ENCODE measurements at regions of chr14 and their contacts with region 1.

Region 1: GRCh38 chr14:67285876-67286452 is 44.7 kb downstream of the PALS1 start:
- DNase-seq: no peak
- ATAC-seq: no peak
- H3K4me3 ChIP-seq: no peak overlapping the region
- H3K27ac ChIP-seq: no peak overlapping the region
- H3K4me1 ChIP-seq: no peaks in the 10 kb centered on the region
- H3K27me3 ChIP-seq: no peaks in the 10 kb centered on the region
- CTCF ChIP-seq: peak; percentile 43 to 78 (median 62)

Region 2: GRCh38 chr14:67166450-67166853 is 119.5 kb before region 1 on chr14:
- intact Hi-C with region 1: loop called (anchors 2 to 5 kb)
- DNase-seq: peak in 1 of 2 donors; percentile 16
- ATAC-seq: no peak
- H3K4me3 ChIP-seq: no peak overlapping the region
- H3K27ac ChIP-seq: no peak overlapping the region
- H3K4me1 ChIP-seq: no peaks in the 10 kb centered on the region
- H3K27me3 ChIP-seq: no peaks in the 10 kb centered on the region
- CTCF ChIP-seq: peak; percentile 30 to 88 (median 77)

Region 3: GRCh38 chr14:67228325-67228984 is 57.5 kb before region 1 on chr14:
- intact Hi-C with region 1: no loop called
- DNase-seq: no peak
- ATAC-seq: no peak
- H3K4me3 ChIP-seq: no peak overlapping the region
- H3K27ac ChIP-seq: no peak overlapping the region
- H3K4me1 ChIP-seq: peaks cover 0 to 4% (median 0%) of the 10 kb centered on the region in 9 donors
- H3K27me3 ChIP-seq: peaks cover 0 to 8% (median 0%) of the 10 kb centered on the region in 7 donors
- CTCF ChIP-seq: no peak

Region 4: DNA sequence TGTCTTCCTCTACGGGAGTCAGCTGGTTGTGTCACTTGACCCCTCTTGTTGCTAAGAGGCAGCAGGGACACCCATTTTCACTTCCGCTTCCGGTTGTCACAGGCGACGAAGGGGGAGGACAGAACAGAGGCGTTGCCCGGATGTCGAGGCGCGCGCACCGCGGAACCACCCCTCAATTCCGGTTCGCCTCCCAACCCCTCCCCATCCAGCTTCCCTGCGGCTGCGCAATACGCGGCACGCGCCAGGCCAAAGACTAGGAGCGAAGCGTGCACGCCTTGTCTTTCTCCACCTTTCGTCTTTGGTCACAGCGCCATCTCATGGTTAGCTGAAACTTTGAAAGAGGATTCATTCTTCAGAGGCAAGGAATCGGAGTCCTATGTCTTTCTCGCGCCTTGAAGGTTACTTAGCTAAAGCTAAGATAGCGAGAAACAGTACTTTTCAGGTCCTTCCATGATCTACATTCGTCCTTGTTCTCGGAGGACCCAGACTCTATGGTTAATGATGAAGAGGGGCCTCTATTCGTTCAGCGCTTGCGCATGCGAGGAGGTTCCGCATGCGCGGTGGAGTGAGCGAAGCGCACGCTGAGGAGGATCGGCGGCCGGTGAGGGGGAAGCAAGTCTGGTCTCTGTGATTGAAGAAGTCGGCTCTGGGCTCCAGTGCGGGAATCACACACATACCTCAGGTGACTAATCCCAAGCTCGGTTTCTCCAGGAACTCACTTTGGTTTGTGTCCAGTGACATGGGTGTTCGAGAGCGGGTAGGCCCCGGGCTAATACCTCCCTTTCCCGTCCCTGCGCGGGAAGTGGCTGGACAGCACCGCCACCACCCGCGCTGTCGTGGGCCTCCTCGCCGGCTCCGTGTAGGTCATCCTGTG is 74.0 kb after region 1 on chr14 and contains the starts of genes ATP6V1D and EIF2S1:
- intact Hi-C with region 1: no loop called
- DNase-seq: peak; percentile 99 to 100
- ATAC-seq: peak; percentile 97 to 100 (median 98)
- H3K4me3 ChIP-seq: peak within 1 kb of the TSS; percentile 69 to 97 (median 78)
- H3K27ac ChIP-seq: peak within 1 kb of the TSS; percentile 92 to 98 (median 97)
- H3K4me1 ChIP-seq: peaks cover 14 to 80% (median 71%) of the 10 kb centered on the region in 9 donors
- H3K27me3 ChIP-seq: no peaks in the 10 kb centered on the region
- CTCF ChIP-seq: peak; percentile 75 to 99 (median 92)
- total RNA-seq, gene ATP6V1D: 118 to 193 (median 175) TPM
- total RNA-seq, gene EIF2S1: 82.3 to 118 (median 94.3) TPM

Measured in heart right ventricle (tissue), 16 donors.